ENCODE measurements at regions of chr16 and their contacts with region 1.

Region 1: GRCh38 chr16:2874912-2875362 is 8.1 kb upstream of the FLYWCH2 start:
- DNase-seq: peak; percentile 53 to 95 (median 68)

Region 2: DNA sequence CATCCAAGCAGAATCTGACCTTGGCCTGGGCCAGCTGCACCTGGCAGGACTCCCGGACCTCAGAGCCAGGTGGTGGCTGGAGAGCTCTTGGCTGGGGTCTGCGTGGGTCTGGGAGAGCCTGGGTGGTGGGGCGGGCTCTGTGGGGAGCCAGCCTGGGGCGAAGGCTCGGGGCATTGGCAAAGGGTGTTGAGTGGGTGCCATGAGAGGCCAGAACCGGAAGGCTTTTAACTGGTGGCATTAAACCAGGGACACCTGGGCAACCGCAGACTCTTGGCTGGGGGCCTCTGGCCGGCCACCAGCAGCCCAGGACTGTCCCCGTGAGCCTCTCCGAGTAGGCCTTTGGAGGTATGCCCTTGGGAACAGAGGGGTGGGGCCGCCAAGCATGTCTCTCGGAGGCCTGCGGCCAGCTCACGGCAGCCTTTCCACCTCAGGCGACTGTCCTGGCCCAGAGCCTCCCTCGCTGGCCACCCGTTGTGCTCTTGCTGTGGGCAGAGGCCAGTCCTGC is 171.6 kb before region 1 on chr16:
- intact Hi-C with region 1: no loop called
- DNase-seq: peak in 4 of 10 donors; percentile 30 to 86 (median 78)

Region 3: GRCh38 chr16:2919511-2920255 is 44.7 kb after region 1 on chr16:
- intact Hi-C with region 1: loop called (anchors 2 kb)
- DNase-seq: peak in 4 of 10 donors; percentile 43 to 60 (median 54)